CD8-positive, alpha-beta memory T cell (primary cell): ENCODE measurements at regions of chr3 and their contacts with region 1.

Region 1: DNA sequence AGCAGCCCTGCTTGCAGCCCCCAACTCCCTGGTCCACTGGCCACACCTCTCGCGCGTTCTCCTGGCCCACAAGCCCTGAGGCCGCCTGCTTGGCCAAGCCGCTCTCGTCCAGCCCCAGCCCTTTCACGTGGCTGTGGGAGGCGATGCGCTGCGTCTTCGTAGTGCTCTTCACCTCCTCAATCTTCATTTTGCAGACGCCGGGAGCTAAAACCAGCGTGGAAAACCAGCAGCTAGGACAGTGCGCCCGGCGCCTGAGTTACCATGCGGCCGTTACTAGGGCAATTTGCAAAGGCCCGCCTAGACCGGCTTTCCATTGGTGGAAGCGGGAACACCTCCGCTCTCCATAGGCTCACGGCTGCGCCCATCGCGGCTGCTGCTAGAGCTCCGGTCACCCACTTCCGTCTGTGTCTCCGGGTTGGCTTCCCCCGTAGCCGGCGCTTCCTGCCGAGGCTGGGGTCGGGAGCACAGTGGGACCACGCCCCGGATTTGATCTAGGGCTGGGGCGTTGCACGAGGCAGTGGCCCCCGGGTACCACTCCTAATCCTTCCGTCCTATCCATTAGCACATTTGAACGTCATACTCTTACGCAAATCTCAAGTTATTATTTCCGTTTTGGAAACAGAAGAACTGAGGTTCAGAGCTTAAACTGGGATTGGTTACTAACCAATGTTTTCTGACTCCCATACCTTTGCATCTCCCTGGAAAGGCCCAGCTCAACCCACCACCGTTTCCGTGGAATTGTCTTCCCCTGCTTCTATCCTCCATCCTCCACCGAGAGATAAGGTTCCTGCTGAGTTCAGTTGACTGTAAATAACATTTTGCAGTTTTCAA is at the start of gene RUVBL1:
- DNase-seq: peak; percentile 95 to 98 (median 97)
- H3K4me3 ChIP-seq: peak within 1 kb of the TSS; percentile 86
- H3K4me3 Mint-ChIP-seq: peak within 1 kb of the TSS; percentile 94 to 99 (median 97)
- H3K27ac ChIP-seq: peak within 1 kb of the TSS; percentile 75
- H3K27ac Mint-ChIP-seq: peak within 1 kb of the TSS; percentile 83 to 99 (median 96)
- H3K4me1 ChIP-seq: peaks cover 19% of the 10 kb centered on the region
- H3K4me1 Mint-ChIP-seq: peaks cover 23 to 41% (median 36%) of the 10 kb centered on the region in 3 donors
- H3K27me3 ChIP-seq: no peaks in the 10 kb centered on the region
- H3K27me3 Mint-ChIP-seq: no peaks in the 10 kb centered on the region
- total RNA-seq, gene RUVBL1: 114 to 116 TPM

Region 2: GRCh38 chr3:128112357-128112968 is 11.3 kb before region 1 on chr3:
- CTCF ChIA-PET with region 1: interaction called, 7 read pairs
- POLR2A ChIA-PET with region 1: interaction called, 14 read pairs
- DNase-seq: peak; percentile 23 to 70 (median 49)
- H3K4me3 ChIP-seq: no peak overlapping the region
- H3K4me3 Mint-ChIP-seq: peak overlapping the region; percentile 31 to 88 (median 72)
- H3K27ac ChIP-seq: peak overlapping the region; percentile 60
- H3K27ac Mint-ChIP-seq: peak overlapping the region; percentile 92 to 99 (median 97)
- H3K4me1 ChIP-seq: peaks cover 33% of the 10 kb centered on the region
- H3K4me1 Mint-ChIP-seq: peaks cover 40 to 54% (median 52%) of the 10 kb centered on the region in 3 donors
- H3K27me3 ChIP-seq: no peaks in the 10 kb centered on the region
- H3K27me3 Mint-ChIP-seq: no peaks in the 10 kb centered on the region

Region 3: DNA sequence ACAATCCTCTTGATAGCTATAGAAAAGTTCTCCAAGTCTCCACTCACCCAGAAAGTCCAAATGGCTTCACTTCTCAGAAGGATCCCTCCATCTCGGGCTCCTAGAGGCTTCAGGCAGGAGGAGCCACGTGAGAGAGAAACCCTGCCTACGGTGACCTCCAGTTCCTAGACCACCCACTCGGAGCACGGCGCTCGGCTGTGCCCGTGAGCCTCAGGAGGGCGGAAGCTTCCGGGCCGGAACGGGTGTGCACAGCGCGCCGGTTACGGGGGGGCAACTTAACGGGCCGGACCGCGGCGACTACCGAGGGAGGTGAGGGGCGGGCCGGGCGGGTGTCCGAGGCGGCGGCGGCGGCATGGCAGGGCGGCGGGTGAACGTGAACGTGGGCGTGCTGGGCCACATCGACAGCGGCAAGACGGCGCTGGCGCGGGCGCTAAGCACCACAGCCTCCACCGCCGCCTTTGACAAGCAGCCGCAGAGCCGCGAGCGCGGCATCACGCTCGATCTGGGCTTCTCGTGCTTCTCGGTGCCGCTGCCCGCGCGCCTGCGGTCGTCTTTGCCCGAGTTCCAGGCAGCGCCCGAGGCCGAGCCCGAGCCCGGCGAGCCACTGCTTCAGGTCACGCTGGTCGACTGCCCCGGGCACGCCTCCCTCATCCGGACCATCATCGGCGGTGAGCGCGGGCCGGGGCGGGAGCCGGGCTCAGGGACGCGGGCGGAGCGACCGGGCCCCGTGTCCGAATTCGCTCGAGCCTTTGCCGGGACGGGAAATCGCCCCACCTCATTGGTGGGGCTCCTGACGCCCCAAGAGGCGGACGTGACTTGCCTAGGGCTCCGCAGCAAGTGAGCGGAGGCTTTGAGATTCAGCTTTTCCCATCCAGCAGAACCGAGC is 29.6 kb after region 1 on chr3 and contains the start of gene EEFSEC:
- CTCF ChIA-PET with region 1: interaction called, 8 read pairs
- POLR2A ChIA-PET with region 1: interaction called, 15 read pairs
- DNase-seq: peak; percentile 74 to 86 (median 81)
- H3K4me3 ChIP-seq: peak within 1 kb of the TSS; percentile 82
- H3K4me3 Mint-ChIP-seq: peak within 1 kb of the TSS; percentile 85 to 99 (median 93)
- H3K27ac ChIP-seq: peak within 1 kb of the TSS; percentile 62
- H3K27ac Mint-ChIP-seq: peak within 1 kb of the TSS; percentile 86 to 99 (median 92)
- H3K4me1 ChIP-seq: peaks cover 9% of the 10 kb centered on the region
- H3K4me1 Mint-ChIP-seq: peaks cover 21 to 46% (median 46%) of the 10 kb centered on the region in 3 donors
- H3K27me3 ChIP-seq: no peaks in the 10 kb centered on the region
- H3K27me3 Mint-ChIP-seq: peaks cover 0 to 1% of the 10 kb centered on the region in 2 donors
- total RNA-seq, gene EEFSEC: 20.4 to 21.8 TPM